HEK293 (cell line): ENCODE measurements at regions of chr11 and their contacts with region 1.

Region 1: DNA sequence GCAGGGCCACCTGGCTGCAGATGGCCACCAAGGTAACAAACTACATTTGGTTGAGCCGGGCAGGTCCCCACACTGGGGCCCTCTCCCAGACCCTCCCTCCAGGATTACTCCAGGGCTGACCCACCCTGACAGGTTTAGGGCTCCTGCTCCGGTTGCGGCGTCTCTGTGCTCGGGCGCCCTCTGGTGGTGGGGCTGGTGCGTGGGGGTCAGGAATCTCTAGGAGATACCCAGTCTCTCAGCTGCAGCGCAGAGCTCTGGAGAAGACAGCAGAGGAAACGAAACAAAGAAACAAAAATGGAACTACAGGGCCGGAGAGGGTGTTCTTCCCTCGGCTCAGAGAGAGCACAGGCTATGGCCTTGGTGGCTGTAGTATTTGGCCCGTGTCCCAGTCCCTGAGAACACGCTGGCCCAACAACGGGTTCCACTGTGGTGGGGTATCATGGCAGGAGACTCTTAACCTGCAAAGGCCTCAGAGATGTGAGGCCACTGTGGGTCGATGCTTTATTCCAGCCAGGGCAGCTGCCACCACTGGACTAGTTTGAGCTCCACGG is 2.4 kb downstream of the C11orf96 start:
- H3K4me3 ChIP-seq: no peak overlapping the region
- H3K27ac ChIP-seq: no peak overlapping the region
- H3K4me1 ChIP-seq: no peaks in the 10 kb centered on the region
- CTCF ChIP-seq: peak; percentile 66

Region 2: DNA sequence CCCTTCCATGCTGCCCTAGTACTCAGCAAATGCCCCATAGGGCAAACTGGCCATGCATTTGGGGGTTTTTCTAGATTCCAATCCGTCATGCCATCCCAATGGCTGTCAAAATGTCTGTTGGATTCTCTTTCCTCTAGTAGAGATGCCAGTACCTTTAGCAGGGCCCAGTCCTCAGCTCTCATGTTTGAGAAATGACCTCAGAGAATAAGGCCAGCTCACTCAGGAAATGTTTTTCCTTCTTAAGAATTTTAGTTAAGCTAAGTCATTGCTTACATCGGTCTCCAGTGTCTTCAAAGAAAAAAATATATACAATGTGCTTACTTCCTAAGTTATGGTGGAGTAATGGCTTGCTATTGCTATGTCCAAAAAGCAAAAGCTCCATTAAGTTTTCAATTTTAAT is 78.3 kb before region 1 on chr11:
- CTCF ChIA-PET with region 1: no interaction called
- POLR2A ChIA-PET with region 1: no interaction called
- H3K4me3 ChIP-seq: no peak overlapping the region
- H3K27ac ChIP-seq: no peak overlapping the region
- H3K4me1 ChIP-seq: no peaks in the 10 kb centered on the region
- CTCF ChIP-seq: no peak

Region 3: GRCh38 chr11:43895601-43896000 is 49.2 kb before region 1 on chr11:
- CTCF ChIA-PET with region 1: interaction called, 10 read pairs
- POLR2A ChIA-PET with region 1: no interaction called
- H3K4me3 ChIP-seq: no peak overlapping the region
- H3K27ac ChIP-seq: no peak overlapping the region
- H3K4me1 ChIP-seq: no peaks in the 10 kb centered on the region
- CTCF ChIP-seq: no peak

Region 4: GRCh38 chr11:43933608-43934551 is 11.0 kb before region 1 on chr11:
- CTCF ChIA-PET with region 1: interaction called, 6 read pairs
- POLR2A ChIA-PET with region 1: interaction called, 10 read pairs
- H3K4me3 ChIP-seq: no peak overlapping the region
- H3K27ac ChIP-seq: no peak overlapping the region
- H3K4me1 ChIP-seq: 0 out of 2 replicates have a peak, but pooled peaks cover 2% of the 10 kb centered on the region
- CTCF ChIP-seq: no peak

Region 5: DNA sequence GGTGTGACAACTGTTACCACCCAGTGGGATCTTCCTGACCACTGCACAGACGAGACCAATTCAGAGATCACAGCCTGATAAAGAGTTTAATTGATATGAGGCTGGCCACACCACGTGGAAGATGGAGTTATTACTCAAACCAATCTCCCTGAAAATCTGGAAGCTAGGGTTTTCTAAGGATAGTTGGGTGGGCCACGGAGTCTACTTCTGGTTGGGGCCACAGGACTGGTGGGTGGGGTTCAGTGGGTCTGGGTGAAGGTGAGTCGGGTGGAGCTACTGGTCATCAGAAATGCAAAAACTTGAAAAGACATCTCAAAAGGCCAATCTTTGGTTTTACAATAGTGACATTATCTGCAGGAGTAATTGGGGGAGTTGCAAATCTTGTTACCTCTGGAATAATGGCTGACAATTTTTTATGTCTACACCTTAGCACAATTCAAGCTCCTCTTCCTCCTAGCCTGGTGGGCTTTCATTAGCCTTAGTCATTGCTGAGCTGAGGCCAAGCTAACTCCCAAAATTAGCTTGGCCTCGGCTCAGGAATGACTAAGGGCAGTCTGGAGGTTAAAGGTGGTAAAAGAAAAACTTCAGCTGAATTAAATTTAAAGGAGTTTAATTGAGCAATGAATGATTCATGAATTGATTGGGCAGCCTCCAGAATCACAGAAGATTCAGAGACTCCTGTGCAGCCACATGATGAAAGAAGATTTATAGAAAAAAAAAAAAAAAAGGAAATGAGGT is 10.7 kb after region 1 on chr11:
- CTCF ChIA-PET with region 1: interaction called, 18 read pairs
- POLR2A ChIA-PET with region 1: no interaction called
- H3K4me3 ChIP-seq: no peak overlapping the region
- H3K27ac ChIP-seq: no peak overlapping the region
- H3K4me1 ChIP-seq: no peaks in the 10 kb centered on the region
- CTCF ChIP-seq: no peak